Gastrocnemius medialis (tissue), 4 donors: ENCODE measurements at regions of chr1 and their contacts with region 1.

Region 1: DNA sequence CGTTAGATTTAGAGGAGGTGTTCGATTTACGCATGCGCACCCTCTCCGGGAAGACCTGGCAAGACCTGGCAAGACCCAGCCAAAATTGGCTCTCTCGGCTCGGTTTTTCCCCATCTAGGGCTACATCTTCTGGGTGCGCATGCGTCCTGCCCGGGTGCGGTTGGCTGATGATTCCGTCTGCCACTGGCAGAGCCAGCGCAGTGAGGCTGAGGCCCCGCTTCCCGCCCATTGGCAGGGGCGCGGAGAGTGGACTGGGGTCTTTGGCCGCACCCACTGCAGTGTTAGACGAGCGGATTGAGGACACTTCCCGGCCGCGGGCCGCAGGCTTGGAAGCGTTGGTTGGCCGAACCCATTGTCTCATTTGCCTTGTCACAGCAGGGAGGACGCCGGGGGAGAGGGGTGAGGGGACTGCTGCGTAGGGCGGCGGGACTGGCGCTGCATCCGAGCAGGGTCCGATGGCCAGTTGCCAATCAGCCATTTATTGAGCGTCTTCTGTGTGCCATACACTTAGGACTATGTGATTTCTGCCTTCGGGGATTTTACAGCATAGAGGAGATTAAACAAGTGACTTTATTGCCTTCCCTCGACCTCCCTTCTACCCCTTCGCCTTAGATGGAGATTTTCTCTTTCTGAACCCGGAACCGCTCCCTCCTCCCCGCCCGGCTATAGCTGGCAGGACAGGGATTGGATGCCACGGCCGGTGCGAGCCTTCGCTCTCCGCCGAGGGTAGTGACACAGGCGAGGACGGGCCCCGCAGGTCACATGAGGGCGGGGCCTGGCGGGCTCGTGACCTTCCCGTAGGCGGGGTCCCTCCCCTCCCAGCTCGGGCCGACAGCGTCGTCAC is 43.7 kb downstream of the MEF2D start:
- DNase-seq: peak; percentile 99
- ATAC-seq: peak; percentile 84 to 85
- H3K4me3 ChIP-seq: peak overlapping the region; percentile 60 to 76 (median 73)
- H3K27ac ChIP-seq: peak overlapping the region; percentile 96 to 99 (median 98)
- H3K4me1 ChIP-seq: peaks cover 4 to 8% of the 10 kb centered on the region in 2 donors
- H3K27me3 ChIP-seq: no peaks in the 10 kb centered on the region
- CTCF ChIP-seq: peak in 1 of 5 experiments; percentile 16
- POLR2A ChIP-seq: peak; percentile 86 to 95

Region 2: DNA sequence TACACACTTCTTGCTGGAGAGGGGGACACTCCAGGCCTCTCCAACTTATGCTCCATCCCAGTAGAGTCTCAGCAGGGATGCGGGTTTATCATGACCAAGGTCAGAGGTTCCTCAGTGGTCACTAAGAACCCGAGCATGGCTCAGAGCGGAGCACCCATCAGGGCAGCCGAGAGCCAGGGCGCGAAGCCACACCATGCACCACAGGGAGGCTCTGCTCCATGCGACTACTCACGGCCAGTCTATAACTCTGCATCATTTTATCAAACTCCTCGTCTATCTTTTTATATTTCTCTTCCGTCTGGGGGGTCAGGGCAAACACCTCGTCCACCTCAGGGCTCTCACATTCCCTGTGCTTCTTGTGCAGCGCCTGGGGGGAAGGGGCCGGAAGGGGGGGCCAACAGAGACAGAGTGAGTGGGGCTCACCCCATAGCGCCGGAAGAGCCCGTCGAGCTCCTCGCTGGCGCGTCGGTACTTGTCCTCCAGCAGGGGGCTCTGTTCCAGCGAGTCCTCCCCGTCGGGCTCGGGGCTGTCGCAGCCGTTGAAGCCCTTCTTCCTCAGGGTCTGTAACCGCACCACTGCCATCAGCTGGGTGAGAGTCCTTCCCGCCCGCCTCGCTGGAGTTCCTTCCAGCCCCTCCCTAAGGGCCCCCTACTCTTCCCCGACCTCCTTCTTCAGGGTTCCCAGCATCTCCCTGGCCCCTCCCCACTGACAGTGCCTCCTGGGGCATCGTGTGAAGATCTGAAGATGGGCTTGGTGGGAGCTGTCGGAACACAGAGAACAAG is 23.8 kb after region 1 on chr1:
- in situ Hi-C with region 1: no loop called
- intact Hi-C with region 1: loop called (anchors 2 kb)
- DNase-seq: peak in 1 of 2 donors; percentile 61
- ATAC-seq: no peak
- H3K4me3 ChIP-seq: no peak overlapping the region
- H3K27ac ChIP-seq: peak overlapping the region; percentile 96 to 99 (median 98)
- H3K4me1 ChIP-seq: peaks cover 95 to 100% of the 10 kb centered on the region in 2 donors
- H3K27me3 ChIP-seq: no peaks in the 10 kb centered on the region
- CTCF ChIP-seq: peak; percentile 56 to 79 (median 72)
- POLR2A ChIP-seq: no peak

Region 3: GRCh38 chr1:156510709-156511108 is 53.9 kb after region 1 on chr1:
- in situ Hi-C with region 1: loop called in 1 of 4 experiments (anchors 10 kb)
- intact Hi-C with region 1: no loop called
- DNase-seq: peak; percentile 99 to 100
- ATAC-seq: peak; percentile 73 to 75
- H3K4me3 ChIP-seq: peak overlapping the region; percentile 5 to 92 (median 56)
- H3K27ac ChIP-seq: peak overlapping the region; percentile 96 to 99 (median 98)
- H3K4me1 ChIP-seq: peaks cover 34 to 57% of the 10 kb centered on the region in 2 donors
- H3K27me3 ChIP-seq: no peaks in the 10 kb centered on the region
- CTCF ChIP-seq: no peak
- POLR2A ChIP-seq: no peak

Region 4: DNA sequence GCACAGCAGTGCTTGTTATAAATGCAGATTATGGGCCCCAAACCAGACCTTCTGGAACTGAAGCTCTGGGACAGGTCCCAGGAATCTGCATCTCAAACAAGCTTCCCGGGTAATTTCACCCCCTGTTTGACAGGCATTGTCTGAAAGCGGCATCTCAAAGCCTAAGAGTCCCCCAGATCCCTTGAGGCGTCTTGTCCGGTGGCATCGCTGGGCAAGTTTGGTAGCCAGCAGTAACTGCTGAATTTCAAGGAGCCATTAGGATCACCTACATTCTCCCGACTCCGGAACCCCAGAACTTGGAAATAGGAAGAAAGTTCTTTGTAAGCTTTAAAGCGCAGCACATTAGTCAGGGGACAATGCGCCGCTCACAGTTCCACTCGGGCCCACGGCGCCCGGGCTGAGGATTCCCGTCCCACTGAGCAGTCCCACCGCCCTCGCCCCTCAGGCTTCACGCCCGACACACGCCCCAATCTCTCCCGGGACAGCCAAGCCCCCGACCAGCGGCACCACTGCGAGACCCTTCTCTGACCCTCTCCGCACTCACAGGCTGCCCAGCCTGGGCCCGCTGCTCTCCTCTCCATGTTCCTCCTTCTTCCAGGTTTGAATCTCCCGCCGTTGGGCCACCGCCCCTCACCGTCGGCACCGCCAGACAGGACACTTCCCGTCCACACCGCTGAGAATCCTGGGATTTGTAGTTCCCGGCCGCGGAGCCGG is 115.3 kb after region 1 on chr1 and contains the start of gene IQGAP3:
- in situ Hi-C with region 1: loop called in 1 of 4 experiments (anchors 10 kb)
- intact Hi-C with region 1: no loop called
- DNase-seq: peak; percentile 80 to 83
- ATAC-seq: peak; percentile 87 to 96
- H3K4me3 ChIP-seq: peak within 1 kb of the TSS; percentile 45 to 69 (median 59)
- H3K27ac ChIP-seq: peak within 1 kb of the TSS in 1 of 4 donors; percentile 13
- H3K4me1 ChIP-seq: peaks cover 0 to 6% of the 10 kb centered on the region in 2 donors
- H3K27me3 ChIP-seq: peaks cover 0 to 4% (median 0%) of the 10 kb centered on the region in 3 donors
- CTCF ChIP-seq: no peak
- POLR2A ChIP-seq: no peak
- total RNA-seq, gene IQGAP3: 0.20 to 0.55 TPM in 2 of 4 donors, not detected in the others

Region 5: DNA sequence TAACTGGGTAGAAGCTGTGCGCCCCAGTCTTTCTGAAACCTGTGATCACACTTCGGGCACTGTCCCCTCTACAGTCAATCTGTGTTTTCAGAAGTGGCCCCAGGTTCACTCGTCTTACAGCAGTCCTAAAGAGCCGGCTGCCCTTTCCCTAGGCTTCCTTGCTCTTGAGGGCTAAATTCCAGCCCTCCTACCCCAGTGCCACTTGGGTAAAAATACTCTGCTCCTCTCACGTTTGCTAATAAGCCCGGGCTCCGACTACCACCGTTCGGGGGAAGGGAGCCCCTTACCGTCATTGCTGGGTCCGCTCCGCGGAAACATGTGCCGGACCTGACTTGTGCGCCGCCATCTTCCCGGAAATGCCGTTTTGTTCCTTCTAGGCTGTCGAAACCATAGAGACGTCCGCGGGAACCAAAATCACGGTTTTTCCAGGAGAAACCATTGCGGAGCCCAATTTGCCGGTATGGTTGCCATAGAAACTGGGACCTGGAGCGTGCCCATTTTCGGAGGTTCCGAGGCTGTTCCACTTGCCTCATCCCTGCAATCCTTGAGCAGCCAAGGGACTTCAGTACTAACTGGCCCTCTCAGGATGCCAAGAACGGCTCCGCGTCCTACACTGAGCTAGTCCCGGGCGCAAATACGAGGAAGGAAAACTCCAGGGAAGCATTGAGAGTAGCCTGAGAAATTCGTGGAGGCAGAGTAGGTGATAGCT is 144.4 kb after region 1 on chr1 and contains the start of gene GPATCH4:
- in situ Hi-C with region 1: loop called (anchors 5 kb)
- intact Hi-C with region 1: loop called (anchors 1 kb)
- DNase-seq: peak; percentile 61 to 66
- ATAC-seq: peak; percentile 88 to 90
- H3K4me3 ChIP-seq: peak within 1 kb of the TSS; percentile 63 to 88 (median 82)
- H3K27ac ChIP-seq: peak within 1 kb of the TSS; percentile 77 to 87 (median 82)
- H3K4me1 ChIP-seq: peaks cover 15 to 16% of the 10 kb centered on the region in 2 donors
- H3K27me3 ChIP-seq: no peaks in the 10 kb centered on the region
- CTCF ChIP-seq: no peak
- POLR2A ChIP-seq: peak in 1 of 2 donors; percentile 30
- total RNA-seq, gene GPATCH4: 35.6 to 103 (median 47.6) TPM

Region 6: GRCh38 chr1:156608036-156608674 is 151.3 kb after region 1 on chr1:
- in situ Hi-C with region 1: loop called (anchors 5 kb)
- intact Hi-C with region 1: loop called (anchors 1 kb)
- DNase-seq: peak; percentile 48 to 59
- ATAC-seq: peak; percentile 99 to 100
- H3K4me3 ChIP-seq: no peak overlapping the region
- H3K27ac ChIP-seq: no peak overlapping the region
- H3K4me1 ChIP-seq: no peaks in the 10 kb centered on the region
- H3K27me3 ChIP-seq: no peaks in the 10 kb centered on the region
- CTCF ChIP-seq: peak; percentile 73 to 81 (median 80)
- POLR2A ChIP-seq: no peak

Region 7: GRCh38 chr1:156625436-156626078 is 168.7 kb after region 1 on chr1:
- in situ Hi-C with region 1: no loop called
- intact Hi-C with region 1: no loop called
- DNase-seq: peak in 1 of 2 donors; percentile 25
- ATAC-seq: peak; percentile 40 to 45
- H3K4me3 ChIP-seq: peak overlapping the region; percentile 45 to 56 (median 53)
- H3K27ac ChIP-seq: peak overlapping the region; percentile 55 to 71 (median 63)
- H3K4me1 ChIP-seq: peaks cover 11 to 18% of the 10 kb centered on the region in 2 donors
- H3K27me3 ChIP-seq: peaks cover 28 to 32% (median 30%) of the 10 kb centered on the region in 3 donors
- CTCF ChIP-seq: peak; percentile 77 to 93 (median 84)
- POLR2A ChIP-seq: no peak

Region 8: DNA sequence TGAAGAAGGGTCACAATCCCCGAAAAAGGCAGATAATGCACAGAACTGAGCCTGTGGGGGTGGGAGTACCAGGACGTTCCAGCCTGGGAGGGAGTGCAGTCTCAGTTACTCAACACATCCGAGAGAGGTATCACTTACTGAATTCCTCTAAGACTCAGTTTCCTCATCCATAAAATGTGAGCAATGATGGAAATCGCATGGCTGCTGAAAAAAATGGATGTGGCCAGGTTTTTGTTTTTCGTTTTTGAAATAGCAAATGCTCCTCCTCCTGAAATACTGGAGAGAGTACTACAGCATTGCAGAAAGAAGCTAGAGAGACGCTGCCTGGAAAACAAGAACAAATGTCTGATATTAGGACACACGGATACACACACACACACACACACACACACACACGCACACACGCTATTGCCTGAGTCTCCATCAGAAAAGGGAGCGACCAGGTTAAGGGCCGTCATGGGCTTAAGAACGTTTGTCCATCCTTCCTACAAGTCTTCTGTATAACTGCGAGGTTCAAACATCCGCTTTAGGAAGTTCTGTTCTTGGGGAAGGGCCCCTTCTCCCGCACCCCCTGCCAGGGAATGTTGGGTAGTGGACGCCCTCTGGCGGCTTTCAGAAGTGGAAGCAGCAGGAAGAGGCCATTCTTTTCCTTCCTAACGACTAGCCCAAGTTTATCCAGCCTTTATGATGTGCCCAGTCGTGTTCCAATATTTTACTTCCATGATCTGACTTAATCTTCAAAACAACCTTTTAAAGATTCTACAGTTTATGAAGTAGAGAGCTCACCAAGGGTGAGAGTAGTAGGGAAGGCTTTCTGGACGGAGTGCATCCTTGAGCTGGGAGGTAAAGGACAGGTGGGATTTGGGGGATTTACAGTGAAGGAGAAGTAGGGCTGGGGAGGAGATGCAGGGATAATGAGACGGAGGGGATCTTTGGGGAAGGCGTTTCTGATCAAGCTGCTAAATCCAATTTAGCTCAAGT is 221.1 kb after region 1 on chr1:
- in situ Hi-C with region 1: no loop called
- intact Hi-C with region 1: loop called (anchors 5 kb)
- DNase-seq: peak; percentile 47 to 68
- ATAC-seq: peak; percentile 72 to 79
- H3K4me3 ChIP-seq: peak overlapping the region; percentile 54 to 64 (median 64)
- H3K27ac ChIP-seq: peak overlapping the region; percentile 73 to 79 (median 77)
- H3K4me1 ChIP-seq: peaks cover 25 to 45% of the 10 kb centered on the region in 2 donors
- H3K27me3 ChIP-seq: no peaks in the 10 kb centered on the region
- CTCF ChIP-seq: peak; percentile 92 to 99 (median 93)
- POLR2A ChIP-seq: no peak

Region 9: GRCh38 chr1:157380523-157380922 is 923.7 kb after region 1 on chr1:
- in situ Hi-C with region 1: no loop called
- intact Hi-C with region 1: no loop called
- DNase-seq: no peak
- ATAC-seq: no peak
- H3K4me3 ChIP-seq: no peak overlapping the region
- H3K27ac ChIP-seq: no peak overlapping the region
- H3K4me1 ChIP-seq: no peaks in the 10 kb centered on the region
- H3K27me3 ChIP-seq: peaks cover 0 to 3% (median 0%) of the 10 kb centered on the region in 3 donors
- CTCF ChIP-seq: no peak
- POLR2A ChIP-seq: no peak